ENCODE measurements at regions of chr20 and their contacts with region 1.

Region 1: GRCh38 chr20:36273414-36274180 is 32.5 kb upstream of the DLGAP4 start:
- DNase-seq: peak; percentile 12
- ATAC-seq: peak; percentile 81
- H3K4me3 ChIP-seq: no peak overlapping the region
- H3K27ac ChIP-seq: no peak overlapping the region
- H3K4me1 ChIP-seq: no peaks in the 10 kb centered on the region
- H3K27me3 ChIP-seq: peaks cover 3% of the 10 kb centered on the region; the same call in 1 of the 2 replicates
- CTCF ChIP-seq: peak; percentile 77

Region 2: DNA sequence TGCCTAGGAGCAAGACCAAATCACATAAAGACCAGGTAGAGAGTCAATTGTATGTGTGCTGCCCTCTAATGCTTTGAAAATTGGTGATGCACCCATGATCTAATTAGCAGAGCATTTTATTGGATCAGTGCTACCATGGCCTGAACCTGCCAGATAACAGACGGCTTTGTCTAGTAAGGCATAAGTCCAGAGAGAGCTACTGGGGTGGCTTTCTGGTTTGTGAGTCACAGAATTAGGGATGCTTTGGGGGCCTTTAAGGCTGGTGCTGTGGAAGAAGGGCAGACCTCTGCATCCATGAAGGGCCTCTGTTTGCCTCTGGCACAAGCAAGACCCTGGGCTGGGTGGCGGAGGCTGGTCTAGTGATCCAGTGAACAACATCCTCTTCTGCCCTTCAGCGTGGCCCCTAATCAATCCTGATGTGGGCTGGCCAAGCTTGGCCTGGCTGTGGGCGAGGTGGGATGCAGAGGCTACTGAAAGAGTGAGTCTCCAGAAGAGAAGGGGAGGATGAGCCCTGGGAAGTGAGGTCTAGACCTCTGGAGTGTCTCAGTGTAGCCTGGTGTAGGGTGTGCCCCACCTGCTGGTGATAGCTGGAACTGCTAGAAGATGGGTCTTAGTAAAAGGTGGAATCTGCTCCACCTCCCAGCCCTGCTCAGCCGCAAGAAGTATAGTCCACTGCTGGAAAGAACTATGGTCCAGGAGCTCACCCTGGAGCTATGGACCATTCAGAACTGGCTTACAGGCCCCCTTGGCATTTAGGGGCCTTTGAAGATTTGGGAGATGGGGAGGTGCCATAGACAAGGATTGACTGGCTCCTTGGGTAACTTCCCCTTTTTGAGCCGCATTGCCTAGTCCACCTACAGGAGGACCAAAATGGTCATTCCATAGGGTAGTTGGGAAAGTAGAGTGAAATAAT is 74.0 kb before region 1 on chr20:
- CTCF ChIA-PET with region 1: interaction called, 11 read pairs
- POLR2A ChIA-PET with region 1: no interaction called
- in situ Hi-C with region 1: no loop called
- intact Hi-C with region 1: no loop called
- DNase-seq: peak; percentile 68
- ATAC-seq: peak; percentile 94
- H3K4me3 ChIP-seq: no peak overlapping the region
- H3K27ac ChIP-seq: no peak overlapping the region
- H3K4me1 ChIP-seq: no peaks in the 10 kb centered on the region
- H3K27me3 ChIP-seq: no peaks in the 10 kb centered on the region; the same call in none of the 2 replicates
- CTCF ChIP-seq: peak; percentile 94

Region 3: GRCh38 chr20:36399147-36399968 is 125.8 kb after region 1 on chr20:
- CTCF ChIA-PET with region 1: interaction called, 14 read pairs
- POLR2A ChIA-PET with region 1: no interaction called
- in situ Hi-C with region 1: no loop called
- intact Hi-C with region 1: no loop called
- DNase-seq: peak; percentile 39
- ATAC-seq: peak; percentile 78
- H3K4me3 ChIP-seq: no peak overlapping the region; a peak in 1 of 4 replicates
- H3K27ac ChIP-seq: no peak overlapping the region
- H3K4me1 ChIP-seq: peaks cover 6% of the 10 kb centered on the region; the same call in 1 of the 2 replicates
- H3K27me3 ChIP-seq: peaks cover 4% of the 10 kb centered on the region
- CTCF ChIP-seq: peak; percentile 76

Region 4: DNA sequence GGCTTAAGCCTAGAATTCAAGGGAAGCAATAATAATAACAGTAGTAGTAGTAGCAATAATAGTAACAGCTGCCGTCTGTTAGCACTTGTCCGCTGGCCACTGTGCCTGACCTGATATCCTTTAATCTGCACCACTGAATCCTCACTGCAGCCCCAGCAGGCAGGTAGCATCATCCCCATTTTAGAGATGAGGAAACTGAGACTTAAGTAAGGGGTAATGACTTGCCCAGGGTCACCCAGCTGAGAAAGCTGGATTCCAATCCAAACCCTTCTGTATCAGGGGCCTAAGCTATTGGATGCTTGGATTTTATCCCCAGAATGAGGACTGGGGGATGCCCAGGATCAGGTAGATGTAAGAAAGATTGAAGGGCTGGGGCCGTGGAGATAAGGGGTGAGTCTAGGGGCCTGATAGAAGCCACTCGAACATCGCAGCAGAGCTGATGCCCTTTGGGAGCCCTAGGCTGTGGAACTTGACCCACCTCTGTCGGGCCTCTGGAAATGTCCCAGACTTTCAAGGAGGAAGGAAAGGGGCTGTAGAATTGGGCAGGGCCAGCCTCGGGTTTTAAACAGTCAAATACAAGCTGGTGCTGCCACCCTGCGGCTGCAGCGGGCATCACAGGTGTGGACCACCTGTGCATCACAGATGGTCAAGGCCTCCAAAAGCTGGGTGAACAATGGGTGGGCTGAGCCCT is 165.6 kb after region 1 on chr20:
- CTCF ChIA-PET with region 1: interaction called, 21 read pairs
- POLR2A ChIA-PET with region 1: no interaction called
- in situ Hi-C with region 1: no loop called
- intact Hi-C with region 1: loop called (anchors 1 kb)
- DNase-seq: no peak
- ATAC-seq: peak; percentile 71
- H3K4me3 ChIP-seq: no peak overlapping the region
- H3K27ac ChIP-seq: no peak overlapping the region
- H3K4me1 ChIP-seq: no peaks in the 10 kb centered on the region; the same call in 1 of the 2 replicates
- H3K27me3 ChIP-seq: no peaks in the 10 kb centered on the region
- CTCF ChIP-seq: peak; percentile 93

Region 5: GRCh38 chr20:38113401-38114325 is 1840.1 kb after region 1 on chr20:
- CTCF ChIA-PET with region 1: no interaction called
- POLR2A ChIA-PET with region 1: no interaction called
- in situ Hi-C with region 1: no loop called
- intact Hi-C with region 1: no loop called
- DNase-seq: no peak
- ATAC-seq: no peak
- H3K4me3 ChIP-seq: no peak overlapping the region
- H3K27ac ChIP-seq: peak overlapping the region; percentile 40
- H3K4me1 ChIP-seq: peaks cover 34% of the 10 kb centered on the region
- H3K27me3 ChIP-seq: no peaks in the 10 kb centered on the region
- CTCF ChIP-seq: peak; percentile 62

Measured in Panc1 (cell line).